CD14-positive monocyte (primary cell): ENCODE measurements at regions of chr2 and their contacts with region 1.

Region 1: GRCh38 chr2:184562532-184562931 is 35.8 kb upstream of the ZNF804A start:
- DNase-seq: peak; percentile 83 to 95 (median 91)
- H3K4me3 ChIP-seq: peak overlapping the region in 1 of 3 experiments; percentile 39
- H3K4me3 Mint-ChIP-seq: peak overlapping the region; percentile 1 to 72
- H3K27ac ChIP-seq: peak overlapping the region in 1 of 2 donors; percentile 62
- H3K27ac Mint-ChIP-seq: peak overlapping the region; percentile 43 to 88 (median 82)
- H3K4me1 ChIP-seq: peaks cover 15 to 20% of the 10 kb centered on the region in 2 donors
- H3K4me1 Mint-ChIP-seq: peaks cover 15% of the 10 kb centered on the region
- H3K27me3 ChIP-seq: no peaks in the 10 kb centered on the region
- H3K27me3 Mint-ChIP-seq: no peaks in the 10 kb centered on the region
- CTCF ChIP-seq: no peak

Region 2: GRCh38 chr2:184598316-184599053 is 36.0 kb after region 1 on chr2 and contains the start of gene ZNF804A:
- intact Hi-C with region 1: loop called (anchors 5 kb)
- DNase-seq: peak; percentile 93 to 96 (median 95)
- H3K4me3 ChIP-seq: peak within 1 kb of the TSS; percentile 66 to 98 (median 96)
- H3K4me3 Mint-ChIP-seq: peak within 1 kb of the TSS; percentile 87 to 92
- H3K27ac ChIP-seq: peak within 1 kb of the TSS; percentile 97
- H3K27ac Mint-ChIP-seq: peak within 1 kb of the TSS; percentile 97 to 100 (median 99)
- H3K4me1 ChIP-seq: peaks cover 27 to 50% of the 10 kb centered on the region in 2 donors
- H3K4me1 Mint-ChIP-seq: peaks cover 40% of the 10 kb centered on the region
- H3K27me3 ChIP-seq: no peaks in the 10 kb centered on the region
- H3K27me3 Mint-ChIP-seq: peaks cover 0 to 4% (median 0%) of the 10 kb centered on the region in 3 donors
- CTCF ChIP-seq: no peak
- polyA plus RNA-seq, gene ZNF804A: 0.83 to 3.7 (median 1.8) TPM